SK-N-SH (cell line): ENCODE measurements at regions of chr3 and their contacts with region 1.

Region 1: GRCh38 chr3:75192146-75192616 is 471.9 kb upstream of the FRG2C start:
- DNase-seq: peak; percentile 28
- H3K4me3 ChIP-seq: peak overlapping the region in 1 of 2 experiments; percentile 32; a peak in 1 of 4 replicates
- H3K27ac ChIP-seq: no peak overlapping the region
- H3K4me1 ChIP-seq: no peaks in the 10 kb centered on the region
- H3K27me3 ChIP-seq: no peaks in the 10 kb centered on the region
- CTCF ChIP-seq: peak; percentile 87
- EP300 ChIP-seq: no peak
- RAD21 ChIP-seq: peak; percentile 64

Region 2: DNA sequence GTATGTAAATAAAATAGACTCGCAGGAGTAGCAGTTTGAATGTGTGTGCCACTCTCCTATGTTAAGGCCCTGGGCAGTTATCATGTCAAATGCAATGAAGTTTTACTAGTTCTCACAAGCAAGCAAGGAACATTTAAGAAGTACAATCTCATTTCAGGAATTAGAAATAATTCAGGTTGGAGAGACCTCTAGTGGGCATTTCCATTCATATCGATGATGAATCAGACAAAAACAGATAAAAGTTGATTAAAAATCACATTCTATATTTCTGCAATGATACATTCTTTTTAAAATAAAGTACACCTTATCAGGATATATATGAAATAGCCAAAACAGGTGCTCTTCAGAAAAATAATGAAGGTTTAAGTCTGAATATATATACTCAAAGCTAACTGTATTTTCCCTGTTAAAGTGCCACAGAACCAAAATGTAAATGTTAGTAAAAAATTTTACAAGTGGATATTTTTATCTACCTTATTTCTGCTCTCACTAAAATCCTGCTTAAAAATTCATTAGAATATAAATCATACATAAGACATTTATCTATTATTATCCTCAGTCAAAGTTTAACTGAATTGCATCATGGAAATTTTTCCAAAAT is 20.5 kb before region 1 on chr3:
- CTCF ChIA-PET with region 1: interaction called, 16 read pairs
- POLR2A ChIA-PET with region 1: no interaction called
- DNase-seq: no peak
- H3K4me3 ChIP-seq: peak overlapping the region in 1 of 2 experiments; percentile 17; a peak in 1 of 4 replicates
- H3K27ac ChIP-seq: no peak overlapping the region
- H3K4me1 ChIP-seq: no peaks in the 10 kb centered on the region
- H3K27me3 ChIP-seq: no peaks in the 10 kb centered on the region
- CTCF ChIP-seq: peak; percentile 65
- EP300 ChIP-seq: no peak
- RAD21 ChIP-seq: peak; percentile 64

Region 3: DNA sequence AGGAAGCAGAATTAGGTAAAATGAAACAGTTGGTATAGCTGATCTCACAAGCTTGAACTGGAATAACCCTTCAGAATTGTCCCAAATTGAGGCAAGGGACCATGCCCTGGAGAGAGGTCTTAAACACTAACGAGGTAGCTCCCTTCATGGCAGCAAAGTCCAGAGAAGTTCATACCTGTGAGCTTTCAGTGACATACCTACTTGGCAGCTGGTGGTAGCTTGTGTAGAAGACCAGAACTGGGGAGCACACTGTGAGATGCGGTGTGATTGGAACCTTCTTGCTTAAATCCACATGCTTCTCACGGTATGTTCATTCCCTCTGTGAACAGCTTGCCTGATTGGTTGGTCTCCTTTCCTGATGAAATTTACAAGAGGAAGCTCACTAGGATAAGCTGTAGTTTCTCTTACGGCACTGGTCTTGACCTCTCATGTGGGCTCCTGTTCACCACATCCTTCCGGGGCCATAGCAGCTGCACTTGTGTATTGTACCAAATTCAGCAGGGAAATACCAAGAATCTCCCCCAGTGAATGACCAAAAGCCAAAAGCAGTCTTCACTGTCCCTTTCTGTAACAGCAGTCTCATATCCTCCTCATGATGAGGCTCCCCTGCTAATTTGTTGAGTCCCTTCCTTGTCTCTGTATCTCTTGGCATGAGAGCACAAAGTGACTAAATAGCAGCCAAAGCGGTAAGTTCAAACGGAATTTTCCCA is 11.8 kb before region 1 on chr3:
- CTCF ChIA-PET with region 1: interaction called, 16 read pairs
- POLR2A ChIA-PET with region 1: no interaction called
- DNase-seq: no peak
- H3K4me3 ChIP-seq: no peak overlapping the region
- H3K27ac ChIP-seq: no peak overlapping the region
- H3K4me1 ChIP-seq: no peaks in the 10 kb centered on the region
- H3K27me3 ChIP-seq: no peaks in the 10 kb centered on the region
- CTCF ChIP-seq: no peak
- EP300 ChIP-seq: no peak
- RAD21 ChIP-seq: no peak

Region 4: GRCh38 chr3:75650191-75650590 is 458.0 kb after region 1 on chr3:
- CTCF ChIA-PET with region 1: no interaction called
- POLR2A ChIA-PET with region 1: no interaction called
- DNase-seq: no peak
- H3K4me3 ChIP-seq: no peak overlapping the region
- H3K27ac ChIP-seq: no peak overlapping the region
- H3K4me1 ChIP-seq: no peaks in the 10 kb centered on the region
- H3K27me3 ChIP-seq: no peaks in the 10 kb centered on the region
- CTCF ChIP-seq: no peak
- EP300 ChIP-seq: no peak
- RAD21 ChIP-seq: no peak